ENCODE measurements at regions of chr18 and their contacts with region 1.

Region 1: DNA sequence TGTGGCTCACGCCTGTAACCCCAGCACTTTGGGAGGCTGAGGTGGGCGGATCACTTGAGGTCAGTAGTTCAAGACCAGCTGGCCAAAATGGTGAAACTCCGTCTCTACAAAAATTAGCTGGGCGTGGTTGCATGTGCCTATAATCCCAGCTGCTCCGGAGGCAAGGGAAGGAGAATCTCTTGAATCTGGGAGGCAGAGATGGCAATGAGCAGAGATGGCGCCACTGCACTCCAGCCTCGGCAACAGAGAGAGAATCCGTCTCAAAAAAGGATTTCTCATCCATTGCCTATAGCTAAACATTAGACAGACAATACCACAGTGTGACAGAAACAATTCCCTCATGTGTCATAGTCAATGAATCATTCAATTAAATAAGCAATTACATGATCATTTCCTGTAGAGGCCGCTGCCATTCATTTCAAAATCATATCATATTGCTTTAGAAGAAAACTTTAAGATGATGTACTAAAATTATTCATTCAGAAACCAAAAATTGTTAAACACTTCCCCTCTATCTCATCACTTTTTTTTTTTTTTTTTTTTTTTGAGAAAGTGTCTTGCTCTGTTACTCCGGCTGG is 69.5 kb upstream of the TGIF1 start:
- DNase-seq: no peak
- ATAC-seq: peak; percentile 71; the same call in 1 of the 2 replicates
- H3K4me3 ChIP-seq: no peak overlapping the region
- H3K27ac ChIP-seq: no peak overlapping the region; the same call in 1 of the 2 replicates
- H3K4me1 ChIP-seq: peaks cover 6% of the 10 kb centered on the region; the same call in 1 of the 2 replicates
- H3K27me3 ChIP-seq: no peaks in the 10 kb centered on the region
- CTCF ChIP-seq: peak; percentile 53

Region 2: DNA sequence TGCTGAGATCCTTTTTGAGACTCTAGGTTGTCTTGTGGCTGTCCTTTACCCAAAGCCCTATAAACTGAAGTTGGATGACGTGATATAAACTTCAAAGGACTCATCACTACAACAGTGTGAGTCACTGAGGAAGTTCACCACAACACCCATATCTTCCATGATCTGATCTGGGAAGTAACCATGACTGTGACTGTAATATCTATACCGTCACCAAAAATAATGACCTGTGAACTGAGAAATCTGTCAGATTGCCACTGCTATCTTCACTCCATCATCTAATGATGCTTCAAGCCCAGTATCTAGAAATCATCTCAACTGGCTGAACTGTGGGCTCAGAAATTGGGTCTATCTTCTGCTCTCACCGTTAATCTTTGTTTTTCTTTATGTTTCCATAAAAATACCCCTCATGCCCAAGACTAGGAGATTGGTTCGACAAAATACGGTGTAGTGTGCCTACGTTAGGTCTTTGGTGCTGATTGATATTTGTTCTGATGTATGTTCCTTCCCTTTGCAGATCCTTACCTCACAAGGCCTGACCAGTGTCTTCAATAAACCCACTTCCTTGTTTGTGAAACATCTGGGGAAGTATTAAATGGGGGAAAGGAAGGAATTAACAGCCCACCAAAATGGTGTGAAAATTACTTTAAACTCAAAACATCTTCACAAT is 40.3 kb before region 1 on chr18:
- CTCF ChIA-PET with region 1: interaction called, 15 read pairs
- POLR2A ChIA-PET with region 1: interaction called, 3 read pairs
- in situ Hi-C with region 1: no loop called
- intact Hi-C with region 1: no loop called
- DNase-seq: no peak
- ATAC-seq: no peak
- H3K4me3 ChIP-seq: no peak overlapping the region
- H3K27ac ChIP-seq: peak overlapping the region; percentile 52; the same call in 1 of the 2 replicates
- H3K4me1 ChIP-seq: no peaks in the 10 kb centered on the region
- H3K27me3 ChIP-seq: no peaks in the 10 kb centered on the region
- CTCF ChIP-seq: no peak

Region 3: GRCh38 chr18:3395466-3395865 is 15.0 kb after region 1 on chr18:
- CTCF ChIA-PET with region 1: interaction called, 18 read pairs
- POLR2A ChIA-PET with region 1: interaction called, 11 read pairs
- in situ Hi-C with region 1: no loop called
- intact Hi-C with region 1: no loop called
- DNase-seq: no peak
- ATAC-seq: no peak
- H3K4me3 ChIP-seq: no peak overlapping the region
- H3K27ac ChIP-seq: no peak overlapping the region
- H3K4me1 ChIP-seq: no peaks in the 10 kb centered on the region
- H3K27me3 ChIP-seq: no peaks in the 10 kb centered on the region
- CTCF ChIP-seq: no peak